ENCODE measurements at regions of chr18 and their contacts with region 1.

Region 1: DNA sequence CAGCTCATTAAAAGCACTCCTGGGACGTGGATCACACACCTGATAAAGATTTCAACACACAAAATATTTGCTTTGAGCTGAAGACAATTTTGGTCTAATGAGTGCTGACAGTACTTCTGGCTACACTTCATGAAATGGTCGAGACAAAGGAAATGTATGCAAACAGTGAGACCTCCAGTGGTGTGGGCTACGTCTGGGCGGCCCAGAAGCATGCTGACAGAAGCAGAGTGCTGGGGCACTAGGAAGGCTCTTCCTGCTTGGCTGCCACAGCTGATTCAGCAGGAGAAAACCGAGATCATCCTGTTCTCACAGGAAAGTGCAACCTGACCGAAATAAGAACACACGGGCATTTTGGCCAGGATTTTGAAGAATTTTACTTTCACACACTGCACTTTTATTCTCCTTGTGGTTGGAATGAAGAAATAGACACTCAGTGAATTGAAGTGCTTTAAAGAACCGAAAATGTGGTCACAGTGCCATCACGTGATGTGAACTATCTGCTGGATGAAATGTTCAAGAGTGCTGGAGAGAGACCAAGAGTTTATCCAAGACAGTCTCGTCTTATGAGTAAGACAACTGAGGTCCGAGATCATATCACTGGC is 149.5 kb downstream of the CCBE1 start:
- DNase-seq: no peak
- ATAC-seq: peak in 2 of 4 donors; percentile 31 to 37
- H3K4me3 ChIP-seq: no peak overlapping the region
- H3K27ac ChIP-seq: no peak overlapping the region
- H3K4me1 ChIP-seq: peaks cover 0 to 17% (median 3%) of the 10 kb centered on the region in 12 donors
- H3K27me3 ChIP-seq: no peaks in the 10 kb centered on the region
- CTCF ChIP-seq: no peak
- POLR2A ChIP-seq: no peak

Region 2: DNA sequence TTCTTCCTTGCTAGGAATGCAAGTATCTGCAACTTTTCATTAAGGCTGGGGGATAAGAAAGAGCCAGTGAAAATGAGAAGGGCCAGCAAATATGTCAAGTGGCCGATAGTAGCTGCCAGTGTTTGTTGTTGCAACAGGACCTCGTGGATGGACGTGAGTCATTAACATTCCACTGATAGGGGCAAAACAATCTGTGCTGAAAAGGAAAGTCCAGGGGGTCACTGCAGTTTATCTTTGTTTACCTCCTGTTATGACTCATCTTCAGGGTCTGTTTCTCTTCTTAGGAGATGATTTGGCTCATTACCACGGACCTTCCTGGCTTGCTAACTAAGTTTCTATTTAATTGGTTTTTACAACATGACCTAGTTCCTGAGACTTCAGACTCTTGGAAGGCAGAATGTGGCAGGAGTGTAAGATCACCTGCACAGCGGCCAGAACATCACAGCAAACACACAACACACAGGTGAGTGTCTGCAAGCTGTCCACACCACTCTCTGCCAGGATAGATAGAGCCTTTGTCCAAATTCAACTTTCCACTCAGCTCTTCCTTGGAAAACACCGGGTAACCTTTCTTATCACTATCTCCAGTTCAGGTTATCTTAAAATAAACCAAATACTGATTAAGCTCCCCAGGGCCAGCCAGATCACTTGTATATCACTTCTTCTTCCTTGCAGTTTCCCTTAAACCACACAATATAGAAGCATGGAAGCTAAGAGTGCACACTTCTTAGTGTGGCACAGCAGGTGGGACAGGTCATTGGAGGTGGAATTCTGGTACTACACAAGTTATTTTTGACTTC is 31.1 kb before region 1 on chr18:
- intact Hi-C with region 1: loop called in 1 of 10 experiments (anchors 5 kb)
- DNase-seq: peak in 4 of 5 donors; percentile 52 to 67 (median 62)
- ATAC-seq: peak; percentile 89
- H3K4me3 ChIP-seq: no peak overlapping the region
- H3K27ac ChIP-seq: peak overlapping the region in 11 of 12 donors; percentile 15 to 89 (median 69)
- H3K4me1 ChIP-seq: peaks cover 0 to 46% (median 20%) of the 10 kb centered on the region in 12 donors
- H3K27me3 ChIP-seq: no peaks in the 10 kb centered on the region
- CTCF ChIP-seq: no peak
- POLR2A ChIP-seq: no peak

Region 3: GRCh38 chr18:59606193-59607077 is 58.8 kb after region 1 on chr18:
- intact Hi-C with region 1: loop called in 1 of 10 experiments (anchors 5 kb)
- DNase-seq: peak in 2 of 5 donors; percentile 26 to 59
- ATAC-seq: peak; percentile 88 to 94 (median 90)
- H3K4me3 ChIP-seq: no peak overlapping the region
- H3K27ac ChIP-seq: peak overlapping the region in 2 of 12 donors; percentile 9 to 59
- H3K4me1 ChIP-seq: peaks cover 0 to 23% (median 5%) of the 10 kb centered on the region in 12 donors
- H3K27me3 ChIP-seq: no peaks in the 10 kb centered on the region
- CTCF ChIP-seq: no peak
- POLR2A ChIP-seq: no peak

Measured in heart left ventricle (tissue), 16 donors.